AG04449 (cell line): ENCODE measurements at regions of chr3 and their contacts with region 1.

Region 1: GRCh38 chr3:48609088-48610005 is at the start of gene UQCRC1:
- DNase-seq: no peak
- H3K4me3 ChIP-seq: peak within 1 kb of the TSS; percentile 99
- CTCF ChIP-seq: peak; percentile 93

Region 2: DNA sequence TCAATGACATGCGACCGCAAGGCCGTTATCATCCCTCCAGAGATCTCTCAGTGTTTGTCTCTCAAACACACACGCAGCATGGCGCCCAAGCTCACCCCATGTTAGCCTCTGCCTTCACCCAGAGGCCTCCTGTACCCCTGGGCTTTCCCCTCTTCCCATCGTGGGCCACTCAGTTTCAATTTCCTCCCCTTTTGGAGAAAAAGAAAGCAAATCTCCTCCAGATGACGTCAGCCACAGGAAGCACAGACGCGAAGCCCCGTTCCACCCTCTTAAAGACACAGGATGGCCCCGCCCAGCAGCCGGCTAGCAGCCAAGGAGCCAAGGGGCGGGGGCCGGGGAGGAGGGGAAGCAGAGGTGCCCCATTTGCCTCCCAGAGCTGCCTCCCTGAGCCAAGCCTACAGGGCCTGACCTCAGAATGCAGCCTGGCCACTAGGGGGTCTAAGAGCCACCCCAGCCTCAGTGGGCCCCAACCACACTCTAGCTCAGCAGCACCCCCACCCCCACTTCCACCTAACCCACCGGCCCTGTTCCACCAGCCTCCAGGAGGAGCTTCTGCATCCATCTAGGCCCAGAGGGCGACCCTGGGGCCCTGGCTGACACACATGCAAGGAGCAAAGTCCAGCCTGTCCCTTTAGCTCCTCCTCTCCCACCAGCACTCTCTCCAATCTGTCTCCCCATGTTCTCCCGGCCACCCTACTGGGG is 136.3 kb before region 1 on chr3:
- CTCF ChIA-PET with region 1: no interaction called
- POLR2A ChIA-PET with region 1: no interaction called
- DNase-seq: peak; percentile 45
- H3K4me3 ChIP-seq: peak overlapping the region; percentile 85
- CTCF ChIP-seq: peak; percentile 46

Region 3: GRCh38 chr3:48556793-48557626 is 52.3 kb before region 1 on chr3 and contains the start of gene PFKFB4:
- CTCF ChIA-PET with region 1: interaction called, 18 read pairs
- POLR2A ChIA-PET with region 1: no interaction called
- DNase-seq: peak; percentile 93
- H3K4me3 ChIP-seq: peak within 1 kb of the TSS; percentile 86
- CTCF ChIP-seq: peak; percentile 1

Region 4: GRCh38 chr3:48598323-48599076 is 10.8 kb before region 1 on chr3:
- CTCF ChIA-PET with region 1: interaction called, 11 read pairs
- POLR2A ChIA-PET with region 1: interaction called, 3 read pairs
- DNase-seq: peak; percentile 82
- H3K4me3 ChIP-seq: peak overlapping the region; percentile 23
- CTCF ChIP-seq: no peak

Region 5: DNA sequence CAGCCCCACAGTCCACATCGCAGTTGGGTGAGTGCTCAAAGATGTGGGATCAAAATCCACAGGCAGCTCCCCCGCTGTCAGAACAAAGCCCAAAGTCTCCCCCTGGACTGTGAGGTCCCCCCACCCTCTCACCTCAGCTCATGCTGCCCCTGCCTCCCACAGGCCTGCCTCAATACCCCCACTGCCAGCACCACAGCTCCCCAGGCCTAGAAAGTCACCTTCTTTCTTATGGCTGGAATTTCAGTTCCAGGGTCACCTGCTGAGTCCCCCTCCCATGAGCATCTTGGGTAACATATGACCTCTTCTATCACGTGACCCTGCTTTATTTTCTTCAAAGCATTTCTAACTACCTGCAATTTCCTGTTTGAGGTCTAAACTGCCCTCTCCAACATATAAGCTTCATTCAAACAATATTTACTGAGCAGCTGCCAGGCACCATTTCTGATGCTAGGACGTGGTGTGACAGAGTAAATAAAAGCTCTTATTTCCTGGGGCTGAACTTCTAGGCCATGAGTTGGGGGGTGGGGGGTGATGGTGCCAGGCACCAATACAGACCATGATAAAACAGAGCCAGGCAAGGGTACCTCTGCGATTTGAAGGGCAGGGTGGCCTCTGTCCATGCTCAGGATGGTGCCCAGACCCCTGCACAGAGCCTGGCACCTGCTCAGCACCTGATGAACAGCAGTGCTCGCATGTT is 14.7 kb after region 1 on chr3:
- CTCF ChIA-PET with region 1: interaction called, 16 read pairs
- POLR2A ChIA-PET with region 1: no interaction called
- DNase-seq: no peak
- H3K4me3 ChIP-seq: no peak overlapping the region
- CTCF ChIP-seq: no peak